Caco-2 (cell line): ENCODE measurements at regions of chr5 and their contacts with region 1.

Region 1: DNA sequence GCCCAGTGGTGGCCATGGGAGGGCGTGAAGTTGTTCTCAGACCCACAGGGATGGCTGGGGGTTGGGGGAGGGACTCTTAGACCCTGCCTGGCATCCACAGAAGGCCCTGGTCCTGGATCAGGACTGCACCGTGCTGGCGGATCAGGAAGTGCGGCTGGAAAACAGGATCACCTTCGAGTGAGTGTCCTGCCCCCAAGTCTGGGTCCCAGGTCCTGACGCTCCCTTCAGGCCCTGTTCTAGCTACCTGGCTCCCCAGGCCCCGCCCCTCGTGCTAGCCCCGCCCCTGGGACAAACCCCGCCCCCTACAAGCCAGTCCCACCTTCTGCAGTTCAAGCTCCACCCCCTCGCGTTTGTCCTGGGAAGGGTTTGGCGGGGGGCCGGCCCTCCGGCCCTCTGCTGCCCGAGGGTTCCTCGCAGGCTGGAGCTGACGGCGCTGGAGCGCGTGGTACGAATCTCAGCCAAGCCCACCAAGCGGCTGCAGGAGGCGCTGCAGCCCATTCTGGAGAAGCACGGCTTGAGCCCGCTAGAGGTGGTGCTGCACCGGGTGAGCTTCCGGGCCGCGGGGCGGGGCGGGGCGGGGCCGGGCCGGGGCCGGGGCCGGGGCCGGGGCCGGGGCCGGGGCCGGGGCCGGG is 12.9 kb downstream of the RGS14 start:
- DNase-seq: peak; percentile 97
- H3K4me3 ChIP-seq: peak overlapping the region; percentile 80
- H3K4me3 Mint-ChIP-seq: peak overlapping the region; percentile 83
- H3K27ac Mint-ChIP-seq: peak overlapping the region; percentile 59
- H3K4me1 ChIP-seq: peaks cover 25% of the 10 kb centered on the region
- H3K4me1 Mint-ChIP-seq: peaks cover 15% of the 10 kb centered on the region
- H3K27me3 ChIP-seq: no peaks in the 10 kb centered on the region
- H3K27me3 Mint-ChIP-seq: no peaks in the 10 kb centered on the region
- CTCF ChIP-seq: peak; percentile 68 to 89

Region 2: DNA sequence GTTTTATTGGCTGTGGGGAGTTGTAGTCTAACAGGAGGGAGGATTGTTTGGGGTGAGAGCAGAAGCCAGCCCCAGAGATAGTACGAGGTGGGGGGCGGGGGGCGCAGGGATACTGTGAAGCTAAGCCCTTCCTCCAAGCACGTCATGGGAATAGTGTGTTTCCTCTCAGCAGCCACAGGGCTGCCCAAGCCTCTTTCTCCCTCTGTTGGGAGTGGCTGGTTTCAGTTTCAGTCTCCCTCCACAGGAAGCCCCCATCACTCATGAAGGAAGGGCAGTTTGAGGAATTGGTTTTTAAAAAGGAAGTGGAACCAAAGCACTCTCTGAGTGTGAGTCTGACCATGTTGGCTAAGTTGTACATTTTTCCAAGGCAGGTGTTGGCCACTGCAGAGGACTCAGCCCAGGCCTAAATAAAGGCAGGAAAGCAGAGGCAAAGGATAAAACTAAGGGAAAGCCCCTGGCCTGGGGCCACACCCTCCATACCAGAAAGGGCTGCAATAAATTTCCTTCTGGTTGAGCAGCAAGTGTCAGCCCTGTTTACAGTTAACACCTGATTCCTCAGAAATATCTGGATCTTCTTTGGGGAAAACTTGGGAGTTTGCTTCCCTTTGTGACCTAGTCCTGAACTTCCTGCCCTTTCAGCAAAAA is 70.2 kb before region 1 on chr5:
- CTCF ChIA-PET with region 1: no interaction called
- POLR2A ChIA-PET with region 1: no interaction called
- intact Hi-C with region 1: no loop called
- DNase-seq: no peak
- H3K4me3 ChIP-seq: no peak overlapping the region
- H3K4me3 Mint-ChIP-seq: no peak overlapping the region
- H3K27ac Mint-ChIP-seq: peak overlapping the region; percentile 32
- H3K4me1 ChIP-seq: peaks cover 29% of the 10 kb centered on the region
- H3K4me1 Mint-ChIP-seq: peaks cover 21% of the 10 kb centered on the region
- H3K27me3 ChIP-seq: no peaks in the 10 kb centered on the region
- H3K27me3 Mint-ChIP-seq: no peaks in the 10 kb centered on the region
- CTCF ChIP-seq: no peak

Region 3: GRCh38 chr5:177311723-177312648 is 58.6 kb before region 1 on chr5 and contains the start of gene MXD3:
- CTCF ChIA-PET with region 1: interaction called, 15 read pairs
- POLR2A ChIA-PET with region 1: no interaction called
- intact Hi-C with region 1: loop called (anchors 1 kb)
- DNase-seq: peak; percentile 99
- H3K4me3 ChIP-seq: peak within 1 kb of the TSS; percentile 93
- H3K4me3 Mint-ChIP-seq: peak within 1 kb of the TSS; percentile 82
- H3K27ac Mint-ChIP-seq: peak within 1 kb of the TSS; percentile 93
- H3K4me1 ChIP-seq: peaks cover 11% of the 10 kb centered on the region
- H3K4me1 Mint-ChIP-seq: peaks cover 13% of the 10 kb centered on the region
- H3K27me3 ChIP-seq: no peaks in the 10 kb centered on the region
- H3K27me3 Mint-ChIP-seq: no peaks in the 10 kb centered on the region
- CTCF ChIP-seq: no peak
- total RNA-seq, gene MXD3: 19.8 and 20.6 TPM in 2 replicates

Region 4: DNA sequence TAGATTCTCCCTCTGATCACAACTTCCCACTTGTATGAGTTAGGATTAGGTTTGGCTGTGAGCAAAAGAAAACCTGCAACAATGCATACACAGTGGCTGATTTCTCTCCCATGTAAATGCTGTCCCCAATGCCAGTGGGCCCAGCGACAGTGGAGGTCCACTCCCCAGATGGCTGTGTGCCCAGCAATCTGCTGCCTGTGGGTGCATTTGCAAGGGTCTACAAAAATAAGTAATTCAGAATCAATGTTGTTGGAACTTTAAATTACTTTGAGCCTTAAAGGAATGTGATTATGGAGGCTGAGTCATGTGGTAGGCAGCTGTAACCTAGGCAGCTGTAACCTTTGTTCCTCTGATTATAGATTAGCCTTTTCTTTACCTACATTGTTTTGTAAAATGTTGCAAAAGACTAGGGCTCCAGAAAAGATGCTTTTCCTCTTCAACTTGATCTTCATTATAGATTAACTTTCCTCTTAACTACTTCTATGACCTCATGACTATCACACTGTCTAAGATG is 44.7 kb before region 1 on chr5:
- CTCF ChIA-PET with region 1: interaction called, 15 read pairs
- POLR2A ChIA-PET with region 1: no interaction called
- intact Hi-C with region 1: no loop called
- DNase-seq: peak; percentile 46 to 70
- H3K4me3 ChIP-seq: no peak overlapping the region
- H3K4me3 Mint-ChIP-seq: peak overlapping the region; percentile 2
- H3K27ac Mint-ChIP-seq: peak overlapping the region; percentile 95
- H3K4me1 ChIP-seq: peaks cover 41% of the 10 kb centered on the region
- H3K4me1 Mint-ChIP-seq: peaks cover 33% of the 10 kb centered on the region
- H3K27me3 ChIP-seq: no peaks in the 10 kb centered on the region
- H3K27me3 Mint-ChIP-seq: no peaks in the 10 kb centered on the region
- CTCF ChIP-seq: no peak

Region 5: DNA sequence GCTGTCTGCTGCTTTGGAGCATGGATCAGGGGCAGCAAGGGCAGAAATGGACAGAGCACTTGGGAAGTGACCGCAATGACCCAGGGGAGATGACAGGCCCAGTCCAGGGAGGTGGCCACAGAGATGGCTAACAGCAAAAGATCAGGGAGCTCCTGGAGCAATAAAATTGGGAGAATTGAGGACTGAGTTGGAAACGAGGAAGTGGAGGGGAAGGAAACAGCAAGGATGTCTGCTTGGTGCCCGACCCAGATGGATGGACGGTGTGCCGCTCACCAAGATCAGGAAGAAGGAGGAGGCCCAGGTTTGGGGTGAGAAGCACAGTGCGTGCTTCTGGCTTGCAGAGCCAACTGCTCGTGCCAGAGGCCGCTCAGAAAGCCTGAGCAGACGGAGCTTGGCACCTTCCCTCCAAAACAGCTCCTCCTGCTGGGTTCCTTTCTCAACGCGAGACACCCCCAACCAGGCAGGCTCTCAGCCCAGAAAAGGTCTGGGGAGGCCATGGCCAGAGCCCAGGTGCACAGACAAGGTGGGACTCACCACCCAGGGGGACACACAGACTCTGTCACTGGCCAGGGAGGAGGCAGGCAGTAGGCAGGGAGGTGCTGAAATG is 11.9 kb after region 1 on chr5:
- CTCF ChIA-PET with region 1: interaction called, 57 read pairs
- POLR2A ChIA-PET with region 1: interaction called, 23 read pairs
- intact Hi-C with region 1: loop called (anchors 1 kb)
- DNase-seq: peak in 1 of 2 experiments; percentile 53
- H3K4me3 ChIP-seq: no peak overlapping the region
- H3K4me3 Mint-ChIP-seq: no peak overlapping the region
- H3K27ac Mint-ChIP-seq: peak overlapping the region; percentile 36
- H3K4me1 ChIP-seq: peaks cover 30% of the 10 kb centered on the region
- H3K4me1 Mint-ChIP-seq: peaks cover 30% of the 10 kb centered on the region
- H3K27me3 ChIP-seq: no peaks in the 10 kb centered on the region
- H3K27me3 Mint-ChIP-seq: no peaks in the 10 kb centered on the region
- CTCF ChIP-seq: peak in 1 of 2 experiments; percentile 36

Region 6: GRCh38 chr5:177403792-177404640 is 33.4 kb after region 1 on chr5:
- CTCF ChIA-PET with region 1: interaction called, 92 read pairs
- POLR2A ChIA-PET with region 1: interaction called, 7 read pairs
- intact Hi-C with region 1: loop called (anchors 1 kb)
- DNase-seq: peak; percentile 87 to 89
- H3K4me3 ChIP-seq: peak overlapping the region; percentile 88
- H3K4me3 Mint-ChIP-seq: peak overlapping the region; percentile 93
- H3K27ac Mint-ChIP-seq: peak overlapping the region; percentile 59
- H3K4me1 ChIP-seq: peaks cover 6% of the 10 kb centered on the region
- H3K4me1 Mint-ChIP-seq: peaks cover 6% of the 10 kb centered on the region
- H3K27me3 ChIP-seq: no peaks in the 10 kb centered on the region
- H3K27me3 Mint-ChIP-seq: no peaks in the 10 kb centered on the region
- CTCF ChIP-seq: peak; percentile 65 to 86

Region 7: GRCh38 chr5:177454397-177455035 is 83.9 kb after region 1 on chr5:
- CTCF ChIA-PET with region 1: interaction called, 16 read pairs
- POLR2A ChIA-PET with region 1: interaction called, 7 read pairs
- intact Hi-C with region 1: no loop called
- DNase-seq: peak; percentile 90 to 97
- H3K4me3 ChIP-seq: peak overlapping the region; percentile 92
- H3K4me3 Mint-ChIP-seq: peak overlapping the region; percentile 77
- H3K27ac Mint-ChIP-seq: peak overlapping the region; percentile 87
- H3K4me1 ChIP-seq: peaks cover 7% of the 10 kb centered on the region; the same call in 1 of the 2 replicates
- H3K4me1 Mint-ChIP-seq: peaks cover 7% of the 10 kb centered on the region
- H3K27me3 ChIP-seq: no peaks in the 10 kb centered on the region
- H3K27me3 Mint-ChIP-seq: no peaks in the 10 kb centered on the region
- CTCF ChIP-seq: peak; percentile 62 to 95